ENCODE measurements at regions of chr11 and their contacts with region 1.

Region 1: DNA sequence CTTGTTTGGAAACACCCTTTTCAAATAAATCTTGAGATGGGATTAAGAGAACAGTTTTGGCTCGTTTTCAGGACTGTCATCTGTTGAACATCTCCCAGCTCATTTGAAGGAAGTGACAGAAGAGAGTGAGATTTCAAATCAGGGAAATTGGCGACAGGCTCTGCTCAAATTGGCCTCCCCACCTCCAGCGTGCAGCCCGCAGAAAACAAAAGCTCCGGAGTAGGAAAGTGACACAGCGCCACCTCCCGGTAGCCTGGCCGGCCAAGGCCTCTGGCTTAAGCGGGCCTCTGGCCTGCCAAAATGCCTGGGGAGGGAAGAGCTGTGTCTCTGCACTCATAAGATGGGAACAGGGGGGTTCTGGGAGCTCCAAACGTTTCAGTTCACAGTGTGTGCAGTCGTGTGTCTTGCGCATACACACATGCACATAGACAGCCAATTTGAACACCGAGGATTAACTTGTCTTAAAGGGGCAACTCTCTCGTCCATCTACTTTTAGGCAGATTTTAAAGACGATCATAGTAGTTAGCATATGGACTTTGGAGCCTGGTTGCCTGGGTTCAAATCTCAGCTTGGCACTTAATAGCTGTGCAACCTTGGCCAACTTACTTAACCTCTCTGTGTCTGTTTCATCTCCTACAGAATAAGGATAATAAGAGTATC is 132.7 kb upstream of the RCN1 start:
- DNase-seq: peak; percentile 63
- H3K4me3 Mint-ChIP-seq: no peak overlapping the region
- H3K27ac Mint-ChIP-seq: no peak overlapping the region
- H3K4me1 Mint-ChIP-seq: peaks cover 5% of the 10 kb centered on the region
- H3K27me3 Mint-ChIP-seq: peaks cover 10% of the 10 kb centered on the region

Region 2: DNA sequence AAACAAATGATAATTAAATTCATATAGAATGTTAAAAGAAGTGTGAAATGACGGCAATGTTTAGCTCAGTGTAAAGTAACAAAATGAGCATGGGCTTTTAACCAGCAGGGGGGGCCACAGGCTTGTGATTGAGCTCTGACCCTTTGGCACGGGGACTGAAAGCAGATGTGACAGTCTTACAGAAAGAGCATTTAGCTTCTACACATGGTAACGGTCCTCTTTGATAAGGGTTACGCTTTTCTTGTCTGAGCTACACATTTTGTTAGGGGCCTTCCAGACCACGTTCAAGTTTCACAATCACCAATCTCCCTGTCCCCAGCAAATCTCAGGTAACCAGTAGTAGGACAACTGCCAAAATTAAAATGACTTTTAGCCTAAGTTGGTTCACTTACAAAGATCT is 851.1 kb before region 1 on chr11:
- intact Hi-C with region 1: loop called (anchors 2 kb)
- DNase-seq: no peak
- H3K4me3 Mint-ChIP-seq: no peak overlapping the region
- H3K27ac Mint-ChIP-seq: no peak overlapping the region
- H3K4me1 Mint-ChIP-seq: no peaks in the 10 kb centered on the region
- H3K27me3 Mint-ChIP-seq: no peaks in the 10 kb centered on the region

Region 3: DNA sequence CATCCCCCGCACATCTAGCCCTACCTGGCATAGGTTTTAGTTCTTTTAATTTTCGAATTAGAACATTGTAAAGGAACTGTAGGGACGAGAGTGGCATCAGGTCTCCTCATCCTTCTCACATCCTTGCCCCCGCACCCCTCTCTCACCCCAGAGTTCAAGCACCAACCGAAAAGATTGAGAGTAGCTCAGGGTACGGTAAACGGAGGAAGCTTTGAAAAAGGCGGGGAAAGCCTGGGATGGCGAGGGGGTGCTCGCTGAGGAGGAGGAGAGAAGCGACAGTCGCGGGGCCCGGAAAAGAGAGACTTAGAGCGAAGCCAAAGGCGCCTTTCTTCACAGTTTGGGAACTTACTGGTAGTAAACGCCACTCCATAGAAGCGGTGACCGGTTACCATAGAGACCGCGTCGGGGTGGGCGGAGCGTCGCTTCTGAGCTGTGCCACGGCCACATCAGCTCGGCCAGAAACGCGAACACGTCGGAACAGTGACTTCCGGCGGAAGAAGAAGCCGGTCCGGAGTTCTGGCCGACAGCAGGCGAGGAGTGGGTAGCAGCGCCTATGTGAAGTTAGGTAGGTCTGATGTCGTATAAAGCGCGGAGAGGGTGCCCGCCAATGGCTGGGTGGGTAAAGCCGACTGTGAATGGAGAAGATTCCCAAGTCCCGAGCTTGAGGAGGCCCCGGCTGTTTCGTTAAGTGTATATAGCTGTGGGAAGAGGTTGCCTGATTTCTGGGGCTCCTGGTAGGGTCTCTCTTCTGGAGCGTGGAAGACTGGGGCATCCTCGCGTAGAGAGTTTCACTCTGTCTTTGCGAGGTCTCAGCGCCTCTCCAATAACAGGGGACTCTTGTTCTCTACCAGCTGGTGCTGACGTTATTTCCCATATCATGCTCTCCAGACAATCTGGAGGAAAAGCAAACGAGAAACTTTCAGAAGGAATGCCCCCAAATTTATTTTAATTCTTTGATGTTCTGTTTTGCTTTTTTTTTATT is 588.6 kb before region 1 on chr11 and contains the starts of genes DCDC1 and DNAJC24:
- intact Hi-C with region 1: loop called (anchors 10 kb)
- DNase-seq: peak; percentile 89
- H3K4me3 Mint-ChIP-seq: peak within 1 kb of the TSS; percentile 99
- H3K27ac Mint-ChIP-seq: peak within 1 kb of the TSS; percentile 95
- H3K4me1 Mint-ChIP-seq: peaks cover 25% of the 10 kb centered on the region
- H3K27me3 Mint-ChIP-seq: peaks cover 7% of the 10 kb centered on the region
- total RNA-seq, gene DCDC1: not detected in 2 replicates
- total RNA-seq, gene DNAJC24: 15.8 and 20.6 TPM in 2 replicates

Region 4: DNA sequence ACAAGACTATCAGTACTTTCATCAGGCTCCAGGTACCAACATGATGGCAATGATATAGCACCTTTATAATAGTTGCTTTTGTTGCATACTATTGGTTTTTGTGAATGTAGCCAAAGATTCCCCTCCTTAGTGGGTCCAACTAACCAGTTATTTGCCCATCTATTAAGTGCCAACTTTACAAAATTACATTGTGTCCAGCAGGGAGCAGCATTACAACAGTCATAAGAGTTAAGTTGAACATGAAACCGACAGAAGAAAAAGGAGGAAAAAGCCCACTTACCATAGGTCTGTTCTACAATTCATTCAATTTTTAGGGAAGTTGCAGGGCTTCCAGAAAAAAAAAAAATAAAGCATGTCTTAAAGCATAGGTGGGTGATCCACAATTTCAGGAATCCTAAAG is 470.4 kb before region 1 on chr11:
- intact Hi-C with region 1: loop called (anchors 1 kb)
- DNase-seq: no peak
- H3K4me3 Mint-ChIP-seq: no peak overlapping the region
- H3K27ac Mint-ChIP-seq: no peak overlapping the region
- H3K4me1 Mint-ChIP-seq: peaks cover 6% of the 10 kb centered on the region
- H3K27me3 Mint-ChIP-seq: no peaks in the 10 kb centered on the region

Region 5: DNA sequence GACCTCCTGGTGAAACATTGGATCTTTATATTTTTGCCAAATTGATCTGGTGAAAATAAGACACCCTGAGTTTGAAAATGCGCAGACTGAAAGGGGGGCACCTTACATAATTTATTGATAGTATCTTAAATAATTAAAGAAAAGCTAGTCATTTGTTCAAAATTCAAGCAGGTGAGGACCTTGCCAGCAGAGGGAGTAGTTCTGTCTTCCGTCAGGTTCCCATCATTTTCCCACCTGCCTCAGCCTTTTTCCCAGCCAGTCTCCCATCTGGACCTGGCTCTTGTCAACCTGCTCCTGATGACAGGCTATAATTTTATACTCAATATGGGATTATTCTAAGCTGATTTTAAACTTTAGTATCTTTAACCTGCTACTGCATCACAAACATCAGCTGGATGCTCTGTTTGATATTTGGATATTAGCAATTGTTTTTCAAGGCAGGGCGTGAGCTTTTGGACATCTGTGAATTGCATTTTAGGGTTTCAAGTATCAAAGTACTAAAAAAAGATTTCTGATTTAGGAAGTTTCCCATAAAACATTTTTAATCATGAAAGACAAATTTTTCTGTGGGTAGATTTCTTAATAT is 316.6 kb before region 1 on chr11:
- intact Hi-C with region 1: loop called (anchors 5 kb)
- DNase-seq: no peak
- H3K4me3 Mint-ChIP-seq: no peak overlapping the region
- H3K27ac Mint-ChIP-seq: no peak overlapping the region
- H3K4me1 Mint-ChIP-seq: no peaks in the 10 kb centered on the region
- H3K27me3 Mint-ChIP-seq: no peaks in the 10 kb centered on the region

Region 6: DNA sequence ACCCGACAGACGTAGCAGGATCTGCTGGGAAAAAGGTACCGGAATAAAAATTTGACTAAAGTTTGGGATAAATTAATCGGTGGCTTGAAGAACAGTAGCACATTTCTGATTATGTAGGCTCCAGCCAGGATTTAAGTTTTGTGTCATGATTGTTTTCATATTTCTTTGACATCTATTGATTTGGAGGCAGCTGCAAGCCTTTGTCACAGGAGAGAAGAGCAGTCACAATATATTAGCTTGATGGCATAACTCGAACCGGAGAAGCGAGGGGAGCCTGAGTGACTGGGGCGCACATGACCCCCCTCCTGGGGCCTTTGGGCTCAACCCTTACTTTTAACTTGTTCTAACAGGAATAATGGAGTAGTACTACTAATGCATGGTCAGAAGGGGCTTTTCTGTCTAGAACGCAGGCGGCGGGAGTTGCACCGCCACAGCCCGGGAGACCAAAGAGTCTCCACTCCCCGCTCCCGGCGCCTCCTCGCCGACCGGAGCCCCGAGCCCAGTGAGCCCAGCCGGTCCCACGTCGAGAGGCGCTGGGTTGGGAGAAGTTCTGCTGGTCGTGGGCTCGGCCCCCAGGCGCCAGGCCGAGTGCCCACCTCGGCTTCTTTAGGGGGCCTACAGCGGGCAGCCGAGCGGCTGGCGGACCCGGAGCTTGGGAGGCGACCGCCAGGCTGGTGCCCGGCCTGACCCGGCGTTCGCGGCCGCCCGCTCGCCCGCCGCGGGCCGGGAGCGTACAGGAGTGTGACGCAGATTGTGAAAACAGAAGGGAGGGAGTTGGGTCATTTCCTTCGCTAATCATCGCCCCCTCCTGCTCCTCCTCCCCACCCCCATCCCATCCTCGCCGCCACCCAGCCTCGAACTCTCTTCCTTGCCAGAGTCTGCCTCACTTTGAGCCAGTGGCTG is 131.4 kb before region 1 on chr11:
- intact Hi-C with region 1: loop called (anchors 5 kb)
- DNase-seq: no peak
- H3K4me3 Mint-ChIP-seq: peak overlapping the region; percentile 1
- H3K27ac Mint-ChIP-seq: peak overlapping the region; percentile 62
- H3K4me1 Mint-ChIP-seq: peaks cover 7% of the 10 kb centered on the region
- H3K27me3 Mint-ChIP-seq: peaks cover 75% of the 10 kb centered on the region

Region 7: DNA sequence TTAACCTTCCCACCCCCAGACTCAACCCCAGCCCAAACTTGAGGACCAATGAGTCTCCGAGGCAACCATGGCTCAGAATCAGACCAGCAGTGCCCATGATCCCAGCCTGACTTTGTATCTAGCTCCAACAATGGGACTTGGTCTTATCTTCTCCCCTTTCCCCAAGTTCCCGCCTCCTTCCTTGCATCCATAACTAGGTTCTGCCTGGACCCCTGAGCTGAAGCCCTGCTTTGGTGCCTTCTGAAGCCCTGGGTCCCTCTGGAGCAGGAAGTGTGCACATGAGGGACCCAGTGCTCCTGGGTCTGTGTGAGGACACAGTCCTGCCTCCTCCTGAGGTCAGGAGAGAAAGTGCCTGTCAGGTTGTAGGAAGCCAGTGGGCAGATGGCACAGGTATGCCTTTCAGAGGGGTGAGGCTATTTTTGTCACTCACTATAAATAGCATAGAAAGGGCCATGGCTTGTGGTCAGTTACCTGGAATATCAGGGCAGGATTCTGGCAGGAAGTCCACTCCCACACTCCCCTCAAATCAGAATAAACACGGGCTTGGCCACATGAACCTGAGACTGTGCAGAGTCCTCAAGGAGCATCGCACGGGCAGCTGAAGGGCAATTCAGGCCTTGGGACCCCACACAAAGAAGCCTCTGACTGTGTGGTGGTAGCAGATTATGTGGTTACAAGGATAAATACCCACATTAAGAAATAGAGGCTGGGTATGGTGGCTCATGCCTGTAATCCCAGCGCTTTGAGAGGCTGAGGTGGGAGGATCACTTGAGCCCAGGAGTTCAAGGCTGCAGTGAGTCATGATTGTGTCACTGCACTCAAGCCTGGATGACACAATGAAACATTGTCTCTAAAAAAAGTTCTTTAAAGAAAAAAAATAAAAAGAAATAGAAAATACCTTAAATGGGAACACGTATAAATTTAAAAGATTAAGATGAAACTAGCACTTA is 160.1 kb after region 1 on chr11:
- intact Hi-C with region 1: no loop called
- DNase-seq: no peak
- H3K4me3 Mint-ChIP-seq: no peak overlapping the region
- H3K27ac Mint-ChIP-seq: no peak overlapping the region
- H3K4me1 Mint-ChIP-seq: peaks cover 22% of the 10 kb centered on the region
- H3K27me3 Mint-ChIP-seq: peaks cover 10% of the 10 kb centered on the region

Region 8: DNA sequence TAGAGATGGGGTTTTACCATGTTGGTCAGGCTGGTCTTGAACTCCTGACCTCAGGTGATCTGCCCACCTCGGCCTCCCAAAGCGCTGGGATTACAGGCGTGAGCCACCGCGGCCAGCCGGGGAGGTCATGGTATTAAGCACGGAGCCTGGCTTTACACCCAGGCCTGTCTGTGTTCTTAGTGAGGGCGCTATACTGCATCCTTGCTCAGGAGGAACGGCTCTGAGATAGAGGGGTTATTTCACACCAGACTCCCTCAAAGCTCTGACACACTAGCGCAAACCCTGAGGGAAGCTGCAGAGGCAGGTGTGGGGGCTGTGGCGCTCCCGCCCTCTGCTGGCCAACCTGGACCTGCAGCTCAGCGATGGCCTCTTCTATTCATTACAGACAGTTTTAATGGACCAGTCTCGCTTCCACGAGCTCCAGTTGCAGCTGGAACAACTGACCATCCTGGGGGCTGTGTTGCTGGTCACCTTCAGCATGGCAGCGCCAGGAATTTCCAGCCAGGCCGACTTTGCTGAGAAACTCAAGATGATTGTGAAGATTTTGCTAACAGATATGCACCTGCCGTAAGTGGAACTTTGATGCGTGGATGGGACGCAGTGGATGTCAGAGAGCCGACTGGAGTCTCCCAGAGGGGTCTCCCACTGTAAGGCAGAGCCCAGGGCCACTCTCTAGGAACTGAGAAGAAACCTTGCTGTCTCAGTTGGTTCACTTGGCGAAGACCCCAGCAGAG is 1107.4 kb after region 1 on chr11:
- intact Hi-C with region 1: no loop called
- DNase-seq: peak; percentile 47
- H3K4me3 Mint-ChIP-seq: no peak overlapping the region
- H3K27ac Mint-ChIP-seq: no peak overlapping the region
- H3K4me1 Mint-ChIP-seq: peaks cover 49% of the 10 kb centered on the region
- H3K27me3 Mint-ChIP-seq: no peaks in the 10 kb centered on the region